ENCODE measurements at regions of chr10 and their contacts with region 1.

Region 1: GRCh38 chr10:32650246-32650655 is 204.3 kb downstream of the CCDC7 start:
- DNase-seq: no peak
- ATAC-seq: no peak
- H3K4me3 ChIP-seq: no peak overlapping the region
- H3K27ac ChIP-seq: no peak overlapping the region
- H3K4me1 ChIP-seq: no peaks in the 10 kb centered on the region
- H3K27me3 ChIP-seq: peaks cover 4% of the 10 kb centered on the region
- CTCF ChIP-seq: no peak
- POLR2A ChIP-seq: no peak
- RAD21 ChIP-seq: no peak

Region 2: DNA sequence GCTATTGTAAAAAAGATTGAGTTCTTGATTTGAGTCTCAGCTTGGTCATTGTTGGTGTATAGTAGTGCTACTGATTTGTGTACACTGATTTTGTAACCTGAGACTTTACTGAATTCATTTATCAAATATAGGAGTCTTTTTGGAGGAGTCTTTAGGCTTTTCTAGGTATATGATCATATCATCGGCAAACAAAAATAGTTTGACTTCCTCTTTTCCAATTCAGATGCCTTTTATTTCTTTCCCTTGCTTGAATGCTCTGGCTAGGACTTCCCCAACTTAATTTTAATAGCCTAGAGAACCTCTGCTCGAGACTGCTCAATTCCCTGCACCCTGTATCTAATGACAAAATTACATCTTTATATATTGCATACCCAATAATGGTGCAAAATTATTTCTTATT is 49.9 kb before region 1 on chr10:
- CTCF ChIA-PET with region 1: no interaction called
- POLR2A ChIA-PET with region 1: interaction called, 10 read pairs
- dilution Hi-C with region 1: no loop called
- in situ Hi-C with region 1: no loop called
- intact Hi-C with region 1: no loop called
- DNase-seq: no peak
- ATAC-seq: no peak
- H3K4me3 ChIP-seq: no peak overlapping the region
- H3K27ac ChIP-seq: no peak overlapping the region
- H3K4me1 ChIP-seq: no peaks in the 10 kb centered on the region
- H3K27me3 ChIP-seq: no peaks in the 10 kb centered on the region
- CTCF ChIP-seq: no peak
- POLR2A ChIP-seq: no peak
- RAD21 ChIP-seq: no peak

Region 3: DNA sequence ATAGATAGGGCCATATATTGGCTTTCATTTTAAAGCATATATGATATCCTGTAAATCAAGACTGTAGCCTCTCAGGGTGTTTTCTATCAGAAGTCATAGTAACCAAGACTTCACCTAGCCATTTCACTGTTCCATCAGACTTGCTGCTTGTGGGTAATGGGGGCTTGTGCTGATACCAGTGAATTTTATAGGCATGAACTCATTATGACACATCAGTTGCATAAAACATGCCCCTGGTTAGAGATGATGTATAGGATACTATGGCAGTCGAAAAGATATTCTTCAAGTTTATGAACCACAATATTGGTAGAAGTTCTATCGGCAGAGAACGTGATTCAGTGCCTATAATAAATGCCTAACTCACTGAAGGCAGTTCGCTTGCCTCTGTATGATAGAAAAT is 101.3 kb after region 1 on chr10:
- CTCF ChIA-PET with region 1: no interaction called
- POLR2A ChIA-PET with region 1: no interaction called
- dilution Hi-C with region 1: no loop called
- in situ Hi-C with region 1: no loop called
- intact Hi-C with region 1: loop called (anchors 10 kb)
- DNase-seq: no peak
- ATAC-seq: no peak
- H3K4me3 ChIP-seq: no peak overlapping the region
- H3K27ac ChIP-seq: no peak overlapping the region
- H3K4me1 ChIP-seq: no peaks in the 10 kb centered on the region
- H3K27me3 ChIP-seq: no peaks in the 10 kb centered on the region
- CTCF ChIP-seq: no peak
- POLR2A ChIP-seq: no peak
- RAD21 ChIP-seq: no peak

Measured in IMR-90 (cell line).